Right ventricle myocardium superior (tissue), 1 donor: ENCODE measurements at regions of chr1 and their contacts with region 1.

Region 1: GRCh38 chr1:45512641-45513054 is 9.0 kb downstream of the PRDX1 start:
- DNase-seq: no peak
- ATAC-seq: peak; percentile 61

Region 2: GRCh38 chr1:45569962-45570581 is 57.4 kb after region 1 on chr1:
- intact Hi-C with region 1: loop called (anchors 5 kb)
- DNase-seq: peak; percentile 62
- ATAC-seq: peak; percentile 90